Naive thymus-derived CD4-positive, alpha-beta T cell (primary cell): ENCODE measurements at regions of chr3 and their contacts with region 1.

Region 1: DNA sequence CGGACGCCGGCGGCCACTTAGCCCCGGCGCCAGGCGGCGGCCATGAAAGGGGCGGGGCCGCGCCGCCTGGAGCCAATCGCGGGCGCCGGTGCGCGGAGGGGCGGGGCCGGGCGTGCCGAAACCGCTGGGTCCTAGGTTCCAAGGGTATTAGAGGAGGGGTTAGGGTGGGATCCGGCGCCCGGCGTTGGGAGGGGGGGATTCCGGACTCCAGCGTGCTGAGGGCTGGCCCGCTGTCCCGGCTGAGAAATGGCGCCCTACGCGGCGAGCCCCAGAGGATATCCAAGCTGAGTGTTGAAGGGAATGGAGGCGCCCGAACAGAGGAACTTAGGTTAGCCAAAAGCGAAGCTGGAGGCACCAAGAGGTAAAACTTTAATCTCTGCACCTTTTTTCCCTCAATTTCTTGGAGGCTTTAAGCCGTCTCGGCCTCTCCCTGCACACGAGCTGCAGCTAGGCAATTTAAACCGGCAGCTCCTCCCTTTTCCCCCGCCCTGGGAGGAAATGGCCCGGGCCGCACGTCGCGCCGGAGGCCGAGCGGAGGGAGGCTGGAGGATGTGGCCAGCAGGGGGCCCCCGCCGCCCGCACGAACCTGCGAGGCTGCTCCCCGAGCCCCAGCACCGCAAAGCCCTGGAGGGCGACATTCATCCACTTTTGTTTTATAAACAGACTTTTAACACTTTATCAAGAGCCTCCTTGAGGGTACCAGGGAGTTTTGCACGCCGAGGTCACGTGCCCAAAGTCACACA is at the start of gene XXYLT1:
- DNase-seq: peak; percentile 82 to 93 (median 91)
- ATAC-seq: peak; percentile 93
- H3K4me3 ChIP-seq: peak within 1 kb of the TSS; percentile 97
- H3K4me3 Mint-ChIP-seq: peak within 1 kb of the TSS; percentile 82 to 91 (median 90)
- H3K27ac ChIP-seq: peak within 1 kb of the TSS; percentile 64
- H3K27ac Mint-ChIP-seq: peak within 1 kb of the TSS; percentile 63 to 89 (median 86)
- H3K4me1 ChIP-seq: peaks cover 16 to 22% of the 10 kb centered on the region in 2 donors
- H3K4me1 Mint-ChIP-seq: peaks cover 16 to 36% (median 29%) of the 10 kb centered on the region in 7 donors
- H3K27me3 ChIP-seq: no peaks in the 10 kb centered on the region
- H3K27me3 Mint-ChIP-seq: no peaks in the 10 kb centered on the region
- total RNA-seq, gene XXYLT1: 4.1 to 11.7 (median 9.1) TPM

Region 2: DNA sequence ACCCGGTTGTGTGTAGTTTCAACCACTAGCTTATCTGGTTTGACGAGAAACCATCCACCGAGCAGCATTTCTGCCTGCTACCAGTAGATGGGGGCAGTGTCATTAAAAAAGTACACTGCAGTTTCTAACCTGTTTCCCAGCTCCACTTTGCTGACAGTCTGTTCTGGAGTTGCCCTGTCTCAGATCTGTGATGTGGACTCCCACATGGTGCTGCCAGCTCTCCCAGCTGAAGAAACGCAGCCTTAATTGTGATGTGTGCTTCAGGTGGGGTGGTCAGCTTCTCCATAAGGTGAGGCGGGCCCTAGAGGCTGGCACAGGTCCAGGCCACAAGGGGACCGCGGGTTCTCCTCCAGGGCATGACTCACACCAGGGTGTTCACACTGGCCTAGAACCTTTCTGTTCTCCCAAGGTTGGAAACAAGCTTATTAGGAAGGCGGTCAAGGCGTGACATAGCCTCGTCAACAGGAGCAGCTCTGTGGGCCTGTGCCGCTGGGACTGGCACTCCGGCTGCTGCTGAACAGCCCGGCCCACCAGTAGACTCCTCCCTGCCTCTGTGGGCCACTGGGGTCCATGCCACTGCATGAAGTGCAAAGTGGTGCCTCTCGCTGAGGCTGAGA is 588.5 kb before region 1 on chr3:
- CTCF ChIA-PET with region 1: interaction called, 7 read pairs
- POLR2A ChIA-PET with region 1: interaction called, 5 read pairs
- intact Hi-C with region 1: loop called (anchors 1 kb)
- DNase-seq: peak; percentile 33 to 75 (median 60)
- ATAC-seq: peak; percentile 77
- H3K4me3 ChIP-seq: no peak overlapping the region
- H3K4me3 Mint-ChIP-seq: peak overlapping the region in 2 of 10 donors; percentile 12 to 25
- H3K27ac ChIP-seq: no peak overlapping the region
- H3K27ac Mint-ChIP-seq: peak overlapping the region in 1 of 9 donors; percentile 25
- H3K4me1 ChIP-seq: peaks cover 12 to 14% of the 10 kb centered on the region in 2 donors
- H3K4me1 Mint-ChIP-seq: peaks cover 10 to 41% (median 28%) of the 10 kb centered on the region in 7 donors
- H3K27me3 ChIP-seq: no peaks in the 10 kb centered on the region
- H3K27me3 Mint-ChIP-seq: peaks cover 0 to 37% (median 0%) of the 10 kb centered on the region in 5 donors

Region 3: GRCh38 chr3:195063581-195064193 is 207.6 kb before region 1 on chr3:
- CTCF ChIA-PET with region 1: no interaction called
- POLR2A ChIA-PET with region 1: no interaction called
- intact Hi-C with region 1: no loop called
- DNase-seq: no peak
- ATAC-seq: no peak
- H3K4me3 ChIP-seq: no peak overlapping the region
- H3K4me3 Mint-ChIP-seq: no peak overlapping the region
- H3K27ac ChIP-seq: no peak overlapping the region
- H3K27ac Mint-ChIP-seq: peak overlapping the region in 1 of 9 donors; percentile 16
- H3K4me1 ChIP-seq: no peaks in the 10 kb centered on the region
- H3K4me1 Mint-ChIP-seq: peaks cover 0 to 2% (median 0%) of the 10 kb centered on the region in 7 donors
- H3K27me3 ChIP-seq: no peaks in the 10 kb centered on the region
- H3K27me3 Mint-ChIP-seq: peaks cover 0 to 5% (median 0%) of the 10 kb centered on the region in 5 donors

Region 4: DNA sequence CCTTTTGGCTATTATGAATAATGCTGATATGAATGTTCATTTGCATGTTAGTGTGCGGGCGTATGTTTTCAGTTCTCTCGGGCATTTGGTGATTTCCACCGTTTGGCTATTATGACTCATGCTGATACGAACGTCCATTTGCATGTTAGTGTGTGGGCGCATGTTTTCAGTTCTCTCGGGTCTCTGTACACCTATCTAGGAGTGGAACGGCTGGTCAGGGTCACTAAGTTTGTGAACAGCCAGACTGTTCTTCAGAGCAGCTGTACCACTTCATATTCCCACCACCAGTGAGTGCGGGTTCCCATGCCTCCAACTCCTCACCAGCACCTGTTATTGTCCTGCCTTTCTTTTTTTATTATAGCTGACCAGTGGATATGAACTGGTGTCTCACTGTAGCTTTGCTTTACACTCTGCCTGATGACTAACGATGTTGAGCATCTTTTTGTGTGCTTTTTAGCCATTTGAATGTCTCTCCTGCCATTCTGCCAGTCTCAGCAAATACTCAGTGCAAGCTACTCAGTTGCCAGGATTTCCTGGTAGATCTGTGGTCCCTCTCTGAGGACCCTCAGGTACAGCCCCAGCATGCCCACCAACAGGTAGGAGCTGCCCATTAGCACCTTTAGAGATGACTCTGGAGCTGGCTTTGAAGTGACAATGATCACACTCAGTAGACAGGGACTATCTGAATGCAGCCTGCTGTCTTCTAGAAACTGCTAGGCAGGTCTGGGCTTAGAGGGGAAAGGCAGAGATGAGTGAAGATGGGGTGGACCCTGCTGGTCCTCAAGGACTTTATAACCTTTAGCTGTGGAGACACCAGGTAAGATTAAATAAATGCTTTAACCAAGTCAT is 141.4 kb before region 1 on chr3:
- CTCF ChIA-PET with region 1: no interaction called
- POLR2A ChIA-PET with region 1: no interaction called
- intact Hi-C with region 1: no loop called
- DNase-seq: peak in 1 of 9 donors; percentile 43
- ATAC-seq: peak; percentile 52
- H3K4me3 ChIP-seq: no peak overlapping the region
- H3K4me3 Mint-ChIP-seq: peak overlapping the region in 1 of 10 donors; percentile 32
- H3K27ac ChIP-seq: no peak overlapping the region
- H3K27ac Mint-ChIP-seq: peak overlapping the region in 1 of 9 donors; percentile 53
- H3K4me1 ChIP-seq: no peaks in the 10 kb centered on the region
- H3K4me1 Mint-ChIP-seq: peaks cover 8 to 26% (median 15%) of the 10 kb centered on the region in 7 donors
- H3K27me3 ChIP-seq: no peaks in the 10 kb centered on the region
- H3K27me3 Mint-ChIP-seq: no peaks in the 10 kb centered on the region

Region 5: DNA sequence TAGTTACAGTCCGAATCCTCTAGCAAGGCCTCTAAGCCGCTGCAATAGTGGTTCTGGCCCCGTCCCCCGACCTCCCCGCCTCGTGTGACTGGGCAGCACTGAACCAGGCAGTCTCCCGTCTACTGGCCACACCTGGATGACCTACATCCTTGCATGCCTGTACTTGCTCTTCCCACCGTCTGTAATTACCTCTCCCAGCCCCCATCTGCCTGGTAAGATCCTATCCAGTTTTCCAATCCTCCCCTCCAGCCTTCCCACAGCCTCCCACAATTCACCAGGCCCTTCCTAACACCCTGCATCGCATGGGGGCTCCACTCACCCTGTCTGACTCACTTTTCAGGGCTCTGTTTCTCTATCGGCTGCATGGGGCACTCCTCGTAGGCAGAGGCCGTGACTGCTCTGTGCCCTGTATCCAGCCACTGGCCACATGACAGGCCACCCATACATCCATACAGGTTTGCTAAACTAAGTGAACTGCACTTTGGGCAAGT is 33.2 kb before region 1 on chr3:
- CTCF ChIA-PET with region 1: no interaction called
- POLR2A ChIA-PET with region 1: no interaction called
- intact Hi-C with region 1: no loop called
- DNase-seq: no peak
- ATAC-seq: no peak
- H3K4me3 ChIP-seq: no peak overlapping the region
- H3K4me3 Mint-ChIP-seq: no peak overlapping the region
- H3K27ac ChIP-seq: no peak overlapping the region
- H3K27ac Mint-ChIP-seq: no peak overlapping the region
- H3K4me1 ChIP-seq: no peaks in the 10 kb centered on the region
- H3K4me1 Mint-ChIP-seq: peaks cover 0 to 10% (median 0%) of the 10 kb centered on the region in 7 donors
- H3K27me3 ChIP-seq: no peaks in the 10 kb centered on the region
- H3K27me3 Mint-ChIP-seq: no peaks in the 10 kb centered on the region

Region 6: GRCh38 chr3:195442573-195443390 is 171.5 kb after region 1 on chr3 and contains the start of gene ACAP2:
- CTCF ChIA-PET with region 1: no interaction called
- POLR2A ChIA-PET with region 1: no interaction called
- intact Hi-C with region 1: loop called (anchors 1 kb)
- DNase-seq: peak; percentile 96 to 100 (median 98)
- ATAC-seq: peak; percentile 96
- H3K4me3 ChIP-seq: peak within 1 kb of the TSS; percentile 91
- H3K4me3 Mint-ChIP-seq: peak within 1 kb of the TSS; percentile 94 to 98 (median 96)
- H3K27ac ChIP-seq: peak within 1 kb of the TSS; percentile 87
- H3K27ac Mint-ChIP-seq: peak within 1 kb of the TSS; percentile 84 to 95 (median 91)
- H3K4me1 ChIP-seq: peaks cover 24 to 38% of the 10 kb centered on the region in 2 donors
- H3K4me1 Mint-ChIP-seq: peaks cover 30 to 68% (median 55%) of the 10 kb centered on the region in 7 donors
- H3K27me3 ChIP-seq: no peaks in the 10 kb centered on the region
- H3K27me3 Mint-ChIP-seq: no peaks in the 10 kb centered on the region
- total RNA-seq, gene ACAP2: 68.1 to 111 (median 74.2) TPM

Region 7: GRCh38 chr3:195542698-195543499 is 271.6 kb after region 1 on chr3 and contains the start of gene PPP1R2:
- CTCF ChIA-PET with region 1: interaction called, 4 read pairs
- POLR2A ChIA-PET with region 1: interaction called, 13 read pairs
- intact Hi-C with region 1: loop called (anchors 1 kb)
- DNase-seq: peak; percentile 86 to 97 (median 93)
- ATAC-seq: peak; percentile 94
- H3K4me3 ChIP-seq: peak within 1 kb of the TSS; percentile 63
- H3K4me3 Mint-ChIP-seq: peak within 1 kb of the TSS; percentile 89 to 98 (median 93)
- H3K27ac ChIP-seq: peak within 1 kb of the TSS; percentile 98
- H3K27ac Mint-ChIP-seq: peak within 1 kb of the TSS; percentile 92 to 99 (median 97)
- H3K4me1 ChIP-seq: peaks cover 37 to 66% of the 10 kb centered on the region in 2 donors
- H3K4me1 Mint-ChIP-seq: peaks cover 48 to 77% (median 73%) of the 10 kb centered on the region in 7 donors
- H3K27me3 ChIP-seq: no peaks in the 10 kb centered on the region
- H3K27me3 Mint-ChIP-seq: no peaks in the 10 kb centered on the region
- total RNA-seq, gene PPP1R2: 76.1 to 160 (median 150) TPM

Region 8: GRCh38 chr3:195748661-195749060 is 477.4 kb after region 1 on chr3:
- CTCF ChIA-PET with region 1: no interaction called
- POLR2A ChIA-PET with region 1: no interaction called
- intact Hi-C with region 1: loop called in 1 of 2 experiments (anchors 1 kb)
- DNase-seq: no peak
- ATAC-seq: no peak
- H3K4me3 ChIP-seq: no peak overlapping the region
- H3K4me3 Mint-ChIP-seq: peak overlapping the region in 3 of 10 donors; percentile 29 to 40 (median 39)
- H3K27ac ChIP-seq: no peak overlapping the region
- H3K27ac Mint-ChIP-seq: peak overlapping the region in 4 of 9 donors; percentile 45 to 86 (median 70)
- H3K4me1 ChIP-seq: peaks cover 0 to 8% of the 10 kb centered on the region in 2 donors
- H3K4me1 Mint-ChIP-seq: peaks cover 6 to 18% (median 12%) of the 10 kb centered on the region in 7 donors
- H3K27me3 ChIP-seq: no peaks in the 10 kb centered on the region
- H3K27me3 Mint-ChIP-seq: peaks cover 0 to 7% (median 0%) of the 10 kb centered on the region in 5 donors

Region 9: DNA sequence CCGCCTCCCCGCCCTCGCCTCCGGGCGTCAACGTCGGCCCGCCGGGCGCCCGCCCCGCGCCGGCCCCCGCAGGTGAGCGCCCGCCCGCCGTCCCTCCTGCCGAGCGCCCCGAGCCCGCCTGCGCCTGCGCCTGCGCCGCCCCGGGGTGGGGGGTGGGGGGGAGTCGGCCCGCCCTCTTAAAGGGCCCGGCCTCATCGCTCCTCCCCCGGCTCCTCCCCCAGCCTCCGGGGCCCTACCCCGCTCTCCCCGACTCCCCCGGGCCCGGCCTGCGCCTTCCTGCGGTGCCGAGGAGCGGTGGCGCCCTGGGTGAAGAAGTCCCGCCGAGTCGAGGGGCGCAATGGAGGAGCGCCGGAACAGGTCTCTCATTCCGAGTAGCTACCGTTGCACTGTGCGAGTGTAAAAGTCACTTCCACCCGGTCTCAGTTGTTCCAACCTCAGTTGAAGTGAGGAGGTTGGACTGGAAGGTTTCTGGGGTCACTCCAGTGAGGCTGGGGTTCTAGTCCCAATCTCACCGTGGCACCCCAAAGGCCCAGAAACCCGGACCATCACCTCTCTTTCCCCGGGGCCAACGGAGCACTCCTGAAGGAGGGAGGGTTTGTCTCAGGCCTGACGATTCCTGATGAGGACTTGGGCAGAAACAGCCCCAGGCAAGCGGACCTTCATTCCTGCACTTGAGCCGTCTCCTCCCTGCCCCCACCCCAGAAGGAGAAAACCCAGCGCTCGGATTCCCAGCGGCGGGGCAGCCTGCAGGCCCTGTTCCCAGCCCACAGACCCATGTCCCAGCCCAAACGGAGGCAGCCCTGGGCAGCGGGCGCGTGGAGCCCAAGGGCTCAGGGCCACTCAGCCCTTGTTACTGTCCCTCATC is 638.6 kb after region 1 on chr3:
- CTCF ChIA-PET with region 1: no interaction called
- POLR2A ChIA-PET with region 1: interaction called, 3 read pairs
- intact Hi-C with region 1: loop called (anchors 2 to 10 kb)
- DNase-seq: peak; percentile 82 to 93 (median 87)
- ATAC-seq: peak; percentile 81
- H3K4me3 ChIP-seq: peak overlapping the region; percentile 54
- H3K4me3 Mint-ChIP-seq: peak overlapping the region; percentile 40 to 97 (median 70)
- H3K27ac ChIP-seq: peak overlapping the region; percentile 68
- H3K27ac Mint-ChIP-seq: peak overlapping the region in 6 of 9 donors; percentile 10 to 90 (median 68)
- H3K4me1 ChIP-seq: peaks cover 26 to 27% of the 10 kb centered on the region in 2 donors
- H3K4me1 Mint-ChIP-seq: peaks cover 25 to 39% (median 33%) of the 10 kb centered on the region in 7 donors
- H3K27me3 ChIP-seq: no peaks in the 10 kb centered on the region
- H3K27me3 Mint-ChIP-seq: no peaks in the 10 kb centered on the region